Activated naive CD4-positive, alpha-beta T cell treated with anti-CD3 and anti-CD28 coated beads, Interleukin-2, amount 10 ng/mL, durations not matched to agents 7 days and 5 days (primary cell): ENCODE measurements at regions of chr17 and their contacts with region 1.

Region 1: DNA sequence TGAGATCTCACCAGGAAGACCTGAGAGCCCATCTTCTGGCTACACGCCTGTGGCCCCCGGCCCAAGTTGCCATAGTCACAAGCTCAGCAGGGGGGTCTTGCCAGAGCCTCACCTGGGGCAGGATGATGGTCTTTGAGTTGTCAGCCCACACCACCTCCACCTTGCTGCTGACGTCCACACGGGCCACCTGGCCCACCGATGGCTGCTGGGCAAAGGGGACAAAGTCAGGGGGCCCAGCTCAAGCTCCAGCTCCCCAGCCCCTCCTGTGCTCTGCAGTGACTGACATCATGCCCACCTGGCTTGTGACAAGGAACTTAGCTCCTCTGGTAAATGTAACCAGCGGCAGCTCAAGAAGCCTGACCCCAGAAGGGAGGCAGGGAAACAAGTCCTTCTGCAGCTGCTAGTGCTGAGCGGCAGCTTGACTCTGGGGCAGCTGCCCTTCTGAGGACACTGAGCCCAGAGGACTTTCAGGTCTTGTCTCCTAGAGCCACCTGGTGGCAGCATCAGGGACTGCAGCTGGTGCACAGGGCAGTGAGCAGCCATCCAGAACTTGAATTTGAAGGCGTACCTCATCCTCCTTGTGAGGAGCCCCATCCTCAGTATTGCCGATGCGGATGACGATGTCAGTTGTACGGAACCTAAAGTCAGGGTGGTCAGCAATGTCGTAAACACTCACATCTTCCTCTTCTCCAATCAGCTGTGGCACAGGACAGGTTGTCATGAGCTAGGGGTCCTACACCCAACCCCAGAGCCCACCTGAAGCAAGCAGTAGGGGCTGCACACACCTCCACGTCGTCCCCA is 13.5 kb downstream of the SPHK1 start:
- DNase-seq: peak; percentile 91
- H3K4me3 Mint-ChIP-seq: no peak overlapping the region
- H3K27ac Mint-ChIP-seq: peak overlapping the region; percentile 7
- H3K4me1 Mint-ChIP-seq: no peaks in the 10 kb centered on the region
- H3K27me3 Mint-ChIP-seq: no peaks in the 10 kb centered on the region

Region 2: DNA sequence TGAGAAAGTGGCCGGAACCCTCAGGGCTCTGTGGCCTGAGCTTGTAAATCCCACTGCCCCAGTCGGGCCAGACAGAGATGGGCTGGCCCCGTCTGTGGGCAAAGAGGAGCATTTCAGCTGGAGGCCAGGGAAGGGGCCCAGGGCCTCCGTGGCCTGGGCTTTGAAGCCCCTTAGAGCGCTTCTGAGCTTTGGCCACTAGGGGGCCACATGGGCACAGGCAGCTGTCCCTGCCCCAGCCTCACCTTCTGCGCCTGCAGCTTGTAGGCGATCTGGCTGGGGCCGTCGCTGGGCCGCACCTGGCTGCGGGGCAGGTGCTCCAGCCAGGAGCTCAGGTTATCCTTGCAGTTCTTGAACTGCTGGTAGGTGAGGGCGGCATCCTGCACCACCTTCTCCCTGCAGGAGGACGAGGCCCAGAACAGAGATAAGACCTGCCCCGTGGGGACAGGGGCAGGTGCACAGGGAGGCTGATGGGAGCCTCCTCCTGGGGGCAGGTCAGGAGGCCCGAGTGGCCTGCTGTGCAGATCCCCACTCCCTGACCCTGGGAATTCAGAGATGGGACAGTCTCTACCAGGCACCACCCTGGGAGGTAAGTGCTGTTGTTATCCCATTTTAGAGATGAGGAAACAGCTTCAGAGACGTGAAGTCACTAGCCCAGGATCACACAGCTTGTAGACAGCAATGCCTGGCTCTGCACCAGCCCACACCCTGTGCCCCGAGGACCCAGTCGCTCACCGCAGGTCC is 383.5 kb before region 1 on chr17:
- CTCF ChIA-PET with region 1: interaction called, 14 read pairs
- DNase-seq: peak; percentile 87
- H3K4me3 Mint-ChIP-seq: no peak overlapping the region
- H3K27ac Mint-ChIP-seq: peak overlapping the region; percentile 52
- H3K4me1 Mint-ChIP-seq: peaks cover 5% of the 10 kb centered on the region
- H3K27me3 Mint-ChIP-seq: peaks cover 28% of the 10 kb centered on the region

Region 3: GRCh38 chr17:76370261-76370993 is 27.5 kb before region 1 on chr17:
- CTCF ChIA-PET with region 1: interaction called, 20 read pairs
- DNase-seq: no peak
- H3K4me3 Mint-ChIP-seq: no peak overlapping the region
- H3K27ac Mint-ChIP-seq: no peak overlapping the region
- H3K4me1 Mint-ChIP-seq: no peaks in the 10 kb centered on the region
- H3K27me3 Mint-ChIP-seq: peaks cover 35% of the 10 kb centered on the region

Region 4: GRCh38 chr17:76408052-76408849 is 10.4 kb after region 1 on chr17:
- CTCF ChIA-PET with region 1: interaction called, 22 read pairs
- DNase-seq: peak; percentile 85
- H3K4me3 Mint-ChIP-seq: no peak overlapping the region
- H3K27ac Mint-ChIP-seq: no peak overlapping the region
- H3K4me1 Mint-ChIP-seq: peaks cover 6% of the 10 kb centered on the region
- H3K27me3 Mint-ChIP-seq: no peaks in the 10 kb centered on the region

Region 5: GRCh38 chr17:76506408-76507349 is 108.8 kb after region 1 on chr17:
- CTCF ChIA-PET with region 1: interaction called, 11 read pairs
- DNase-seq: peak; percentile 90
- H3K4me3 Mint-ChIP-seq: no peak overlapping the region
- H3K27ac Mint-ChIP-seq: peak overlapping the region; percentile 42
- H3K4me1 Mint-ChIP-seq: peaks cover 50% of the 10 kb centered on the region
- H3K27me3 Mint-ChIP-seq: peaks cover 36% of the 10 kb centered on the region